Panc1 (cell line): ENCODE measurements at regions of chr1 and their contacts with region 1.

Region 1: GRCh38 chr1:216387782-216388181 is 35.5 kb downstream of the USH2A start:
- DNase-seq: no peak
- ATAC-seq: no peak
- H3K4me3 ChIP-seq: no peak overlapping the region
- H3K27ac ChIP-seq: no peak overlapping the region
- H3K4me1 ChIP-seq: no peaks in the 10 kb centered on the region
- H3K27me3 ChIP-seq: no peaks in the 10 kb centered on the region
- CTCF ChIP-seq: no peak

Region 2: GRCh38 chr1:216641669-216642460 is 254.1 kb after region 1 on chr1:
- CTCF ChIA-PET with region 1: no interaction called
- POLR2A ChIA-PET with region 1: no interaction called
- in situ Hi-C with region 1: no loop called
- intact Hi-C with region 1: no loop called
- DNase-seq: no peak
- ATAC-seq: no peak
- H3K4me3 ChIP-seq: no peak overlapping the region
- H3K27ac ChIP-seq: no peak overlapping the region
- H3K4me1 ChIP-seq: no peaks in the 10 kb centered on the region
- H3K27me3 ChIP-seq: no peaks in the 10 kb centered on the region
- CTCF ChIP-seq: no peak

Region 3: GRCh38 chr1:216726435-216726834 is 338.7 kb after region 1 on chr1:
- CTCF ChIA-PET with region 1: interaction called, 10 read pairs
- POLR2A ChIA-PET with region 1: no interaction called
- in situ Hi-C with region 1: no loop called
- intact Hi-C with region 1: no loop called
- DNase-seq: no peak
- ATAC-seq: no peak
- H3K4me3 ChIP-seq: no peak overlapping the region
- H3K27ac ChIP-seq: no peak overlapping the region
- H3K4me1 ChIP-seq: 0 out of 2 replicates have a peak, but pooled peaks cover 6% of the 10 kb centered on the region
- H3K27me3 ChIP-seq: peaks cover 36% of the 10 kb centered on the region
- CTCF ChIP-seq: no peak